ENCODE measurements at regions of chr15 and their contacts with region 1.

Region 1: DNA sequence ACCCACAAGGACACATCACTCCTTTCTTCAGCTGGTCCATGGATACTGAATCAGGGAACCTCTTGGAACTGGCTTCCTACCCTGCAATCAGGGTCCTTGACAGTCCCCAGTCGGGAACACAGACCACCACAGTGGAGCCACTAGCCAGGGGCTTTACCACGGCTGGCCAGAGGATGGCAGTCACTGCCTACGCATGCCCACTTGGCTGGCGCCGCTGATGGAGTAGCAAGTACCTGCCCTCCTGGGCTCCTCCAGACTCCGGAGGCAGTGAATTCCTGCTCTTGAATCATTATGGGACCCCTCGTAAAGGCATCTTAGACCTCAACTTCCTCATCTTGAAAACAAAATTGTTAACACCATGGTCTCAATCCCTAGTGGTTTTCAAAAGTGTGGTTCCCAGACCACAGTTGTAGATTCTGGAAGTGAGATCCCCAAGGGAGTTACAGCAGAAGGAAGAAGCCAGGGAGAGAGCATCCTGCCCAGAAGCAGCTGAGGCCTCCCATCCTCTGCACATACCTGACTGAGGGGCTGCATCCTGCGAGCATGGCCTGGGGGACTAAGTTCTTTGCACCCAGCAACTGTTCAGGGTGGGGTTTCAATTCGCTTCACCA is 9.1 kb upstream of the SKIC8 start:
- DNase-seq: peak; percentile 66 to 77 (median 70)
- ATAC-seq: peak; percentile 72
- H3K4me3 ChIP-seq: no peak overlapping the region
- H3K27ac ChIP-seq: no peak overlapping the region
- H3K4me1 ChIP-seq: peaks cover 28 to 31% of the 10 kb centered on the region in 2 experiments; a peak in 4 of 5 replicates
- H3K27me3 ChIP-seq: no peaks in the 10 kb centered on the region
- CTCF ChIP-seq: peak; percentile 83 to 90 (median 84)
- EP300 ChIP-seq: no peak
- POLR2A ChIP-seq: no peak
- RAD21 ChIP-seq: peak; percentile 64 to 89

Region 2: DNA sequence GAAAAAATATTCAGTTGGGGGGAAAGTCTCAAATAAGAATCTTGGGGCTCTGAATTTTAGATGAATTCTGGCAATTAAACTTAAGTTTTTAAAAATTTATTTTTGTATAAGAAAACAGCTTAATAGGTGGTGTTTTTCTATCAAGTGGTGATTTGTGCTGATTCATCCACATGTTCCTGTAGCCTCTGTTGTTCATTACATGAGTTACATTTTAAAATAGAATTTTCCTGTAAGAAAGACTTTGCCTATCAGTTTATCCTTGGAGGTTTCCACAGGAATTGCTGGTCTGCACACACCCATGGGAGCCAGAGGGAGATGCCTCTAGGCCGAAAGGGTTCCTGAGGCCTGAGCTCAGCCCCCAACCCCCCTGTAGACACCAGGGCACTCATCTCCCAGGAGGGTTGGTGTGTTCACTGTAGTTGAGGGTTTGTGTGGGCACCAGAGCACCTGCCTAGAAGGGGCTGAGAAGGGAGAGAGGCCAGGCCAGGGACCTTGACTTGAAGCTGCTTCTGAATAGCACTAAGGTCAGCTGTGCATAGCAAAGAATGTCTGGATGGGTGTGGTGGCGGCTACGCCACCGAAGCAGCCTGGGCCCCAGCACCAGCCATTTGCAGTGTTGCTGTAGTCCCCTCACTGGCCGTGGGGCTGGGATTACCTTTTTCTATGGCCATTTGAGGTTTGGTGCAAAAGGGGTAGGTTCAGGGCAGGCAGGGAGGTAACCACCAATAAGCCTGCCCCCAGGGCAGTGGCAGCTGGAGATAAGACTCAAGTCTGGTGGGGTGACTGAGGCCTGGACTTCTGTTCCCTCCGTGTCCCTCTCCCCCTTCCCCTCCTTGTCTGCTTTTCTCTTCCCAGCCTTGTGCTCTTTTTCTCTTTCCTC is 32.2 kb before region 1 on chr15:
- CTCF ChIA-PET with region 1: no interaction called
- POLR2A ChIA-PET with region 1: no interaction called
- in situ Hi-C with region 1: no loop called
- intact Hi-C with region 1: no loop called
- DNase-seq: peak; percentile 56 to 85 (median 70)
- ATAC-seq: peak; percentile 87
- H3K4me3 ChIP-seq: no peak overlapping the region
- H3K27ac ChIP-seq: peak overlapping the region; percentile 82
- H3K4me1 ChIP-seq: peaks cover 20 to 28% of the 10 kb centered on the region in 2 experiments
- H3K27me3 ChIP-seq: no peaks in the 10 kb centered on the region
- CTCF ChIP-seq: no peak
- EP300 ChIP-seq: no peak; the same call in 1 of the 2 replicates
- POLR2A ChIP-seq: peak; percentile 49
- RAD21 ChIP-seq: no peak

Region 3: DNA sequence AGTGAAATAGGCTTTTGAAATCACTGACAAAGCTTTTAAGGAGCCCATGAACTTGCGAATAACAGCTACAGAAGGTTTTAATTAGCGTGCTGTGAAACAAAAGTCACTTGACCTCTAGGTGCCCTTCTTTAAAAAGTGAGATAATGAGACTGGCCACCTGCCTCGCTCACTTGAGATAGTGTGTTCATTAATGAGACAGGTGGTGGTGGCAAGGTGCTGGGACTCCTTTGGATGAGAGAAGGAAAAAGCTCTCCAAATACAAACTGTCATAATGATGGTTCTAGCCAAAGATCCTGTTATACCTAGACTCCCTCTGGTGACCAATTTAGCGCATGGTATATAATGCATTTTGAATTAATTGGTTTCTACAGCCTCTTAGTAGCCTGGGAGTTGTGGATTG is 106.8 kb after region 1 on chr15:
- CTCF ChIA-PET with region 1: no interaction called
- POLR2A ChIA-PET with region 1: interaction called, 3 read pairs
- in situ Hi-C with region 1: loop called (anchors 5 kb)
- intact Hi-C with region 1: loop called (anchors 2 kb)
- DNase-seq: peak in 2 of 4 experiments; percentile 21 to 27
- ATAC-seq: peak; percentile 74
- H3K4me3 ChIP-seq: no peak overlapping the region
- H3K27ac ChIP-seq: no peak overlapping the region
- H3K4me1 ChIP-seq: no peaks in the 10 kb centered on the region
- H3K27me3 ChIP-seq: peaks cover 5 to 30% of the 10 kb centered on the region in 2 experiments
- CTCF ChIP-seq: peak; percentile 23 to 58 (median 37); a peak in 3 of 6 replicates
- EP300 ChIP-seq: no peak
- POLR2A ChIP-seq: no peak
- RAD21 ChIP-seq: peak in 1 of 2 experiments; percentile 61; a peak in 2 of 4 replicates

Region 4: GRCh38 chr15:78422571-78423340 is 114.2 kb after region 1 on chr15:
- CTCF ChIA-PET with region 1: no interaction called
- POLR2A ChIA-PET with region 1: no interaction called
- in situ Hi-C with region 1: loop called (anchors 5 kb)
- intact Hi-C with region 1: loop called (anchors 2 kb)
- DNase-seq: peak; percentile 67 to 73 (median 71)
- ATAC-seq: peak; percentile 87
- H3K4me3 ChIP-seq: no peak overlapping the region
- H3K27ac ChIP-seq: no peak overlapping the region
- H3K4me1 ChIP-seq: no peaks in the 10 kb centered on the region; a peak in 2 of 5 replicates
- H3K27me3 ChIP-seq: no peaks in the 10 kb centered on the region
- CTCF ChIP-seq: peak; percentile 77 to 90 (median 86)
- EP300 ChIP-seq: no peak
- POLR2A ChIP-seq: no peak
- RAD21 ChIP-seq: peak; percentile 48 to 70

Region 5: DNA sequence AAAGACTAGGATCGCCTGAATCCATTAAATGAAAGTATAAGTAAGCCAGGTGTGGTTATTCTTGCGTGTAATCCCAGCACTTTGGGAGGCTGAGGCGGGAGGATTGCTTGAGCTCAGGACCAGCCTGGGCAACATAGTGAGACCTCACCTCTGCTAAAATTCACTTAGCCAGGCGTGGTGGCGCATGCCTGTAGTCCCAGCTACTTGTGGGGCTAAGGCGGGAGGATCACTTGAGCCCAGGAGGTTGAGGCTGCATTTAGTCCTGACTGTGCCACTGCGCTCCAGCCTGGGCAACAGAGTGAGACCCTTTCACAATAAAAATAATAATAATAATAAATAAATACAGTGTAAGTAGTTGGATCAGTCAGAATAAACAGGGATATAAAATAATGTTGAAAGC is 173.4 kb after region 1 on chr15:
- CTCF ChIA-PET with region 1: interaction called, 9 read pairs
- POLR2A ChIA-PET with region 1: no interaction called
- in situ Hi-C with region 1: loop called (anchors 10 kb)
- intact Hi-C with region 1: loop called (anchors 1 kb)
- DNase-seq: no peak
- ATAC-seq: no peak
- H3K4me3 ChIP-seq: no peak overlapping the region
- H3K27ac ChIP-seq: no peak overlapping the region
- H3K4me1 ChIP-seq: no peaks in the 10 kb centered on the region
- H3K27me3 ChIP-seq: no peaks in the 10 kb centered on the region
- CTCF ChIP-seq: no peak
- EP300 ChIP-seq: no peak
- POLR2A ChIP-seq: no peak
- RAD21 ChIP-seq: no peak

Region 6: GRCh38 chr15:78596514-78596913 is 288.0 kb after region 1 on chr15:
- CTCF ChIA-PET with region 1: no interaction called
- POLR2A ChIA-PET with region 1: no interaction called
- in situ Hi-C with region 1: no loop called
- intact Hi-C with region 1: no loop called
- DNase-seq: peak in 1 of 4 experiments; percentile 27
- ATAC-seq: no peak
- H3K4me3 ChIP-seq: no peak overlapping the region
- H3K27ac ChIP-seq: no peak overlapping the region
- H3K4me1 ChIP-seq: no peaks in the 10 kb centered on the region; a peak in 2 of 5 replicates
- H3K27me3 ChIP-seq: peaks cover 3 to 4% of the 10 kb centered on the region in 2 experiments; a peak in 4 of 5 replicates
- CTCF ChIP-seq: no peak
- EP300 ChIP-seq: no peak
- POLR2A ChIP-seq: no peak
- RAD21 ChIP-seq: no peak

Region 7: GRCh38 chr15:78618490-78618934 is 310.0 kb after region 1 on chr15:
- CTCF ChIA-PET with region 1: no interaction called
- POLR2A ChIA-PET with region 1: interaction called, 3 read pairs
- in situ Hi-C with region 1: no loop called
- intact Hi-C with region 1: loop called (anchors 5 kb)
- DNase-seq: peak; percentile 82 to 86 (median 85)
- ATAC-seq: peak; percentile 93
- H3K4me3 ChIP-seq: no peak overlapping the region
- H3K27ac ChIP-seq: no peak overlapping the region
- H3K4me1 ChIP-seq: peaks cover 0 to 12% of the 10 kb centered on the region in 2 experiments; a peak in 1 of 5 replicates
- H3K27me3 ChIP-seq: peaks cover 21 to 35% of the 10 kb centered on the region in 2 experiments; a peak in 4 of 5 replicates
- CTCF ChIP-seq: peak; percentile 80 to 87 (median 84)
- EP300 ChIP-seq: no peak
- POLR2A ChIP-seq: no peak
- RAD21 ChIP-seq: peak; percentile 76 to 86

Region 8: GRCh38 chr15:78709263-78709882 is 400.8 kb after region 1 on chr15:
- CTCF ChIA-PET with region 1: no interaction called
- POLR2A ChIA-PET with region 1: no interaction called
- in situ Hi-C with region 1: loop called (anchors 10 kb)
- intact Hi-C with region 1: loop called (anchors 1 kb)
- DNase-seq: peak; percentile 67 to 82 (median 80)
- ATAC-seq: peak; percentile 100
- H3K4me3 ChIP-seq: no peak overlapping the region
- H3K27ac ChIP-seq: no peak overlapping the region
- H3K4me1 ChIP-seq: peaks cover 0 to 3% of the 10 kb centered on the region in 2 experiments; a peak in 2 of 5 replicates
- H3K27me3 ChIP-seq: no peaks in the 10 kb centered on the region; a peak in 2 of 5 replicates
- CTCF ChIP-seq: peak; percentile 85 to 90 (median 90)
- EP300 ChIP-seq: no peak
- POLR2A ChIP-seq: no peak
- RAD21 ChIP-seq: peak; percentile 85 to 89